Mammary epithelial cell (primary cell): ENCODE measurements at regions of chr13 and their contacts with region 1.

Region 1: GRCh38 chr13:63954683-63955082 is 2539.0 kb upstream of the PCDH20 start:
- DNase-seq: no peak
- H3K4me3 ChIP-seq: no peak overlapping the region
- H3K27ac ChIP-seq: no peak overlapping the region
- H3K4me1 ChIP-seq: no peaks in the 10 kb centered on the region
- H3K27me3 ChIP-seq: peaks cover 3% of the 10 kb centered on the region
- CTCF ChIP-seq: no peak

Region 2: DNA sequence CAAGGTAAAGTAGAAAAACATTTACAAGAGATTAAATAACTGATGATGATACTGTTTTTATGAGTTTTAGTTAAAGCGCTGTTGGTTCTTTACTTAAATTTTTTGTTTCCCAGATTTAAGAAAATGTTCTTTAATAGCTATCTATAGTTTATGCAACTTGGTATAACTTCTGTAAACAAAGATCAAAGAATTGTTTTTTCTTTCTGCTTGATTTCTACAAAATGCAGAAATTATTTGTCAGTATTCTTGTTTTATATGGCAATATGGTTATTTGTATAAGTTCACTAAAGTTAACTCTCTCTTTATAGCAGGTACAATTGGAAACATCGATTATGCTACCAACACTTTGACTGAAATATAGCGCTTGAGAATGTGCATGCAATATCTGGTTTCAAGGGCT is 74.0 kb before region 1 on chr13:
- CTCF ChIA-PET with region 1: no interaction called
- dilution Hi-C with region 1: loop called (anchors 5 kb)
- in situ Hi-C with region 1: no loop called
- intact Hi-C with region 1: no loop called
- DNase-seq: no peak
- H3K4me3 ChIP-seq: no peak overlapping the region
- H3K27ac ChIP-seq: no peak overlapping the region
- H3K4me1 ChIP-seq: no peaks in the 10 kb centered on the region
- H3K27me3 ChIP-seq: no peaks in the 10 kb centered on the region
- CTCF ChIP-seq: no peak

Region 3: DNA sequence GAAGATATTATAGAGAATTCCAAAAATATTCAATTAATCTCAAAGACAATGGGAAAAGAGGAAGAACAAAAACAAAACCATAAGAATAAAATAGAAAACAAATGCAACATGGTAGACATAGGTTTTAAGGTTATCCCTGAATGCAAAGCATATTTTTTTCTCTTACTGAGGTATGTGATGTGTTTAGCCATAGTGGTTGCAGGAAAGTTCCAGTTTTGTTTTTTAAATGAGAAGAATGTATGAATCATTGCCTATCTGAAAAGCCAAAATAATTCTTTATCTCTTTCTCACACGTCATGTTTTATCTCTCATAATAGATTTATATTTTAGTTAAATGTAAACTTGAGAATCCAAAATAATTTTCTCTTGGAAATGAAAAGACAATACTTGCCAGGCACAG is 52.7 kb after region 1 on chr13:
- CTCF ChIA-PET with region 1: no interaction called
- dilution Hi-C with region 1: no loop called
- in situ Hi-C with region 1: no loop called
- intact Hi-C with region 1: no loop called
- DNase-seq: no peak
- H3K4me3 ChIP-seq: no peak overlapping the region
- H3K27ac ChIP-seq: no peak overlapping the region
- H3K4me1 ChIP-seq: no peaks in the 10 kb centered on the region
- H3K27me3 ChIP-seq: no peaks in the 10 kb centered on the region
- CTCF ChIP-seq: no peak